Stomach (tissue), 19 donors: ENCODE measurements at regions of chr11 and their contacts with region 1.

Region 1: DNA sequence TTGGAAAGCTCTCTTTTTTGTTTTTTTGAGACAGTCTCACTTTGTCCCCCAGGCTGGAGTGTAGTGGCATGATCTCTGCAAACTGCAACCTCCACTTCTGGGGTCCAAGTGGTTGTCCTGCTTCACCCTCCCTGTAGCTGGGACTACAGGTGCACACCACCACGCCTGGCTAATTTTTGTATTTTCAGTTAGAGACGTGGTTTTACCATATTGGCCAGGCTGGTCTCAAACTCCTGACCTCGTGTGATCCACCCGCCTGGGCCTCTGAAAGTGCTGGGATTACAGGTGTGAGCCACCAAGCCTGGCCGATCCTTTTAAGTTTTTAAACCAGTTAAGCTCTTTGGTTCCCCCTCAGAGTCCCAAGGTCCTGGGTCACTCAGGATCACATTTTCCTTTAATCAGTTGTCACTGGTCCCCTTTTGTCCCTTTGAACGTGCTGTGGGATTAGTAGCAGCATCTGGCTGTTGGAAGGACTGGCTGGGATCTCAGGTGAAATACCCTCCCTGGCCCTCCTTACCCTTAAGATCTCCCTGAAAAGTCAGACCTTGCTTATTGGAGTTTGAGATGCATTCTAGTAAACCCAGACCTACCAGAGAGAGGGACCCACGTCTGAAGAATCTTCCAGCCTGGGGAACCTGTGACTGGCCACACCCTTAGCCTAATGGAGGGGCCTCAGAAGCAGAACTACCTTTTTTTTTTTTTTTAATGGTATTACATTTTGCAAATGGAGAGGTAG is 8.1 kb downstream of the MALAT1 start:
- DNase-seq: peak; percentile 56 to 92
- H3K4me3 ChIP-seq: peak overlapping the region; percentile 17 to 85 (median 80)
- H3K27ac ChIP-seq: peak overlapping the region; percentile 88 to 99 (median 99)
- H3K4me1 ChIP-seq: peaks cover 32 to 63% (median 55%) of the 10 kb centered on the region in 4 donors
- H3K27me3 ChIP-seq: no peaks in the 10 kb centered on the region
- CTCF ChIP-seq: no peak
- EP300 ChIP-seq: no peak
- POLR2A ChIP-seq: peak in 1 of 4 donors; percentile 48

Region 2: GRCh38 chr11:65382033-65382807 is 124.7 kb before region 1 on chr11 and contains the start of gene SLC25A45:
- intact Hi-C with region 1: no loop called
- DNase-seq: peak; percentile 95 to 97
- H3K4me3 ChIP-seq: peak within 1 kb of the TSS; percentile 37 to 44 (median 41)
- H3K27ac ChIP-seq: peak within 1 kb of the TSS; percentile 96 to 100 (median 97)
- H3K4me1 ChIP-seq: peaks cover 42 to 83% (median 64%) of the 10 kb centered on the region in 4 donors
- H3K27me3 ChIP-seq: no peaks in the 10 kb centered on the region
- CTCF ChIP-seq: peak in 6 of 7 experiments; percentile 68 to 95 (median 87)
- EP300 ChIP-seq: peak; percentile 36
- POLR2A ChIP-seq: no peak
- total RNA-seq, gene SLC25A45: 1.2 to 101 (median 2.4) TPM

Region 3: GRCh38 chr11:65471410-65471762 is 35.6 kb before region 1 on chr11:
- intact Hi-C with region 1: loop called (anchors 5 kb)
- DNase-seq: peak; percentile 83 to 84
- H3K4me3 ChIP-seq: peak overlapping the region; percentile 2 to 11 (median 9)
- H3K27ac ChIP-seq: peak overlapping the region; percentile 79 to 99 (median 95)
- H3K4me1 ChIP-seq: peaks cover 24 to 59% (median 42%) of the 10 kb centered on the region in 4 donors
- H3K27me3 ChIP-seq: no peaks in the 10 kb centered on the region
- CTCF ChIP-seq: peak in 5 of 7 experiments; percentile 58 to 78 (median 66)
- EP300 ChIP-seq: peak; percentile 70
- POLR2A ChIP-seq: no peak